Endothelial cell of umbilical vein (primary cell): ENCODE measurements at regions of chr6 and their contacts with region 1.

Region 1: DNA sequence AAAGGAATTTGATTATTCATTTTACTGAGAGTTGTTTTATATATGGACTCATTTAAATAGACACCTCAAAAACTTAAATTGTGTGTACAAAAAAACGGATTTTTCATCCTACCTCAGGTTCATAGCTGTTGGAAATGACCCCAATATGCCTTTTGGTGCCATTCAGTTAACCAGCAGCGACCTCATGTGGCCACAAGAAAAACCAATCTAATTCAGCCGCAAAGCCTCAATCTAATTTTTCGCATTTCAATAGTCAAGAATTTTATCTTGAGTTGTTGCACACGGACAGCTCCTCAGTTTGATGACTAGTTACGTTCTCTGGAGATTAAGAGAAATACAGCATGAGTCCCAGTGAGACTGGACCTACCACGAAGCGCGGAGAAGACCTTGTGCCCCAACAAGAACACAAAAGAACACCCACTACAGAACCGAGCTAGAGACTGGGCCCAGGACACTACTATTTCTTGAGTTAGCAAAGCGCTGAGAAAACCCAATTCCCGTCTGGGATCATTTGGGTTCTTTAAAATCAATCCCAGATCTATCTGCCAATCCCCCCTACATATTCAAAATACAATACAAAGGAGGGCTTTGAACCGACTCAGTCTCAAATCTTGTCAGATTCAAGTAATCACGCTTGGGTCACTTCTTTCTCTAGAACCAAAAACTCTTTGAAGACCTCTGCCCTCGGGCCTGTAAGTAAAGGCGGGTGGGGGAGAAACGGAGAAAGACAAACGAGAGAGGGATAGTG is 1.1 kb downstream of the TCP11 start:
- DNase-seq: peak; percentile 75
- H3K4me3 ChIP-seq: no peak overlapping the region
- H3K27ac ChIP-seq: no peak overlapping the region
- H3K4me1 ChIP-seq: no peaks in the 10 kb centered on the region
- H3K27me3 ChIP-seq: no peaks in the 10 kb centered on the region
- CTCF ChIP-seq: peak; percentile 62 to 80
- POLR2A ChIP-seq: no peak

Region 2: DNA sequence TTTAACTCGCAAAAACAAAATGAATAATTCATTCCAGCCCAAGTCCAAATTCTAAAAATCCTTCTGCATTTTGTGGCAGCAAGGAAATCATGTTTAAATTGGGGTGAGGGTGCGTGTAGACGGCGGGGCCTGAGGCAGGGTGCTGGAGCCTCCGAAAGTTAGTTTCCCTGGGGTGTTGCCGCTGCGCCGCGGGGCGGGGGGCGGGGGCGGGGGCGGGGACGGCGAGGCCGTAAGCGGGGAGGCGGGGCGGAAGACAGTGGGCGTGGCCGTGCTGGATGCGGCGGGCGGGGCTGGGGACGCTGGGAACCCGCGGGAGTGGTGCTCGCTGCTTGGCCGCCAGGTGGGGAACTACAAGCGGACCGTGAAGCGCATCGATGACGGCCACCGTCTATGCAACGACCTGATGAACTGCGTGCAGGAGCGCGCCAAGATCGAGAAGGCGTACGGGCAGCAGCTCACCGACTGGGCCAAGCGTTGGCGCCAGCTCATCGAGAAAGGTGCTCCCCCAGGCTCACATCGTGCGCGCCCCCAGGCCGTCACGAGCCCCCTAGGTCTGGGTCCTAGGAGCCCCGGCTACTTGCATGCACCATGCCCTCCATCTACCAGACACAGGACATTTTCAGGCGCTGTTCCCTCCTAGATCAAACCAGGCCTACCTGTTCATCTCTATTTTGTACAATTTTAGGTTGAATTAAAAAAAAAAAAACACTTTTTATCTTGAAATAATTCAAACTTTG is 612.9 kb before region 1 on chr6:
- CTCF ChIA-PET with region 1: no interaction called
- POLR2A ChIA-PET with region 1: no interaction called
- dilution Hi-C with region 1: no loop called
- intact Hi-C with region 1: loop called (anchors 1 kb)
- DNase-seq: peak; percentile 89
- H3K4me3 ChIP-seq: peak overlapping the region in 2 of 3 experiments; percentile 4 to 42
- H3K27ac ChIP-seq: no peak overlapping the region
- H3K4me1 ChIP-seq: peaks cover 2% of the 10 kb centered on the region
- H3K27me3 ChIP-seq: no peaks in the 10 kb centered on the region
- CTCF ChIP-seq: peak; percentile 56 to 86
- POLR2A ChIP-seq: peak; percentile 42

Region 3: GRCh38 chr6:34867484-34867883 is 272.6 kb before region 1 on chr6:
- CTCF ChIA-PET with region 1: interaction called, 4 read pairs
- POLR2A ChIA-PET with region 1: no interaction called
- dilution Hi-C with region 1: no loop called
- intact Hi-C with region 1: loop called (anchors 10 kb)
- DNase-seq: no peak
- H3K4me3 ChIP-seq: no peak overlapping the region
- H3K27ac ChIP-seq: no peak overlapping the region
- H3K4me1 ChIP-seq: peaks cover 22% of the 10 kb centered on the region
- H3K27me3 ChIP-seq: no peaks in the 10 kb centered on the region
- CTCF ChIP-seq: no peak
- POLR2A ChIP-seq: no peak

Region 4: GRCh38 chr6:34887753-34888513 is 252.1 kb before region 1 on chr6 and contains the start of gene TAF11:
- CTCF ChIA-PET with region 1: interaction called, 18 read pairs
- POLR2A ChIA-PET with region 1: no interaction called
- dilution Hi-C with region 1: no loop called
- intact Hi-C with region 1: no loop called
- DNase-seq: peak; percentile 93
- H3K4me3 ChIP-seq: peak within 1 kb of the TSS; percentile 80 to 96 (median 87)
- H3K27ac ChIP-seq: peak within 1 kb of the TSS; percentile 82
- H3K4me1 ChIP-seq: peaks cover 14% of the 10 kb centered on the region
- H3K27me3 ChIP-seq: no peaks in the 10 kb centered on the region
- CTCF ChIP-seq: no peak
- POLR2A ChIP-seq: peak; percentile 83
- total RNA-seq, gene TAF11: 37.1 and 41.0 TPM in 2 replicates

Region 5: DNA sequence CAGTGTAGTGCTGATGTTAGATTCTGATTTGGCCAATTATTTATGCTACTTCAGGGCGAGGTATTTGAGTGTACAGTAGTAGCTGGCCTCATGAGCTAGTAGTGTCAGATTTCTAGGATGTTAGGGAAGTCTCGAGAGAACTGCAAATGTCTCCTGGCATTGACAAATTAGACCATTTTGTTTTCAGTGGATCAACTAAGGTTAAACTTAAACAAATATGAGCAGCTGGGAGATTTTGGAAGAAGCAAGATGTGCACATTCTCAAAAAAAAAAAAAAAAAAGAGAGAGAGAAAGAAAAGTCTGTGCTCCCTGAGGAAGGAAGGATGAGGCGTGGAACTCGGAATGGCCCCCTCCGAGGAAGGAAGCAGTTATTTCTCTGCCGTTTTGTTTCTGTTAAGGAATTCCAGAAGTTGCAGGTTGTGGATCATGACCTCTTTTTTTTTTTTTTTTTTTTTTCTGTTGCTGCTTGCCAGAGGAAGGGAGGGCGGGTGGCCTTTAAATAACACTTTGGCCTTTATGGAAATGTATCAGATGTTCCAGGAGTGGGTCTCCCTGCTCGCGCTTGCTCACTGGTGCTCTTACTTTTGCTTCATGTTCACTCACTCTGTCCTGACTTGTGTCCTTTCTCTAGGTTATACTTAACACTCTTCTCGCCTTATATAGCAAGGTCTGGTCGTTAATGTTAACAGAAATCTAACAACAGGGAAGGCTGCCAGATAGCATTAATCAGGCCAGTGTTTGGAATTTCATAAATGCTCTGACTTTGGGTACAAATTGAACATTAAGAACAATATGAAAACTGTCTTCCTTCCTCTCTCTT is 123.4 kb before region 1 on chr6:
- CTCF ChIA-PET with region 1: interaction called, 10 read pairs
- POLR2A ChIA-PET with region 1: no interaction called
- dilution Hi-C with region 1: no loop called
- intact Hi-C with region 1: no loop called
- DNase-seq: peak; percentile 92
- H3K4me3 ChIP-seq: peak overlapping the region in 2 of 3 experiments; percentile 33 to 36
- H3K27ac ChIP-seq: peak overlapping the region; percentile 84
- H3K4me1 ChIP-seq: peaks cover 61% of the 10 kb centered on the region
- H3K27me3 ChIP-seq: no peaks in the 10 kb centered on the region
- CTCF ChIP-seq: no peak
- POLR2A ChIP-seq: peak; percentile 74

Region 6: DNA sequence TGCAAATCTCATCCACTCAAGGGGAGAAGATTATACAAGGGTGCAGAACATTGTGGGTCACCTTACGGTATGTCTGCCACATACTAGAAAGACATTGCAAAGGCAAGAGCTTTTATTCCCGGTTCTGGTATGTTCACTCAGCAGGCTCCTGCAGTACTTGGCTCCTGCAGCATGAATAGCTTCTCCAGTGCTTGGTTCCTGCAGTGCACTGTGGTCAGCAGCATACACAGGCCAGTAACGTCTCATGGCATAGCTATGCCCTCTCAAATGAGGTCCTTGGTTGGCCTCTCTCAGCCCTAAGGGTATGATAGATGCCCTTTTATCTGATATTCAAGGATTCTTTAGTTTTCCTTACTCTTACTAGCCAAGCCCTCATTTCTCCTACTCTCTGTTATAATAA is 11.6 kb before region 1 on chr6:
- CTCF ChIA-PET with region 1: interaction called, 13 read pairs
- POLR2A ChIA-PET with region 1: no interaction called
- dilution Hi-C with region 1: no loop called
- intact Hi-C with region 1: no loop called
- DNase-seq: no peak
- H3K4me3 ChIP-seq: no peak overlapping the region
- H3K27ac ChIP-seq: no peak overlapping the region
- H3K4me1 ChIP-seq: no peaks in the 10 kb centered on the region
- H3K27me3 ChIP-seq: peaks cover 10 to 13% of the 10 kb centered on the region in 2 experiments
- CTCF ChIP-seq: no peak
- POLR2A ChIP-seq: no peak

Region 7: GRCh38 chr6:35202066-35202546 is 62.0 kb after region 1 on chr6:
- CTCF ChIA-PET with region 1: interaction called, 168 read pairs
- POLR2A ChIA-PET with region 1: no interaction called
- dilution Hi-C with region 1: no loop called
- intact Hi-C with region 1: loop called (anchors 1 kb)
- DNase-seq: no peak
- H3K4me3 ChIP-seq: no peak overlapping the region
- H3K27ac ChIP-seq: no peak overlapping the region
- H3K4me1 ChIP-seq: no peaks in the 10 kb centered on the region
- H3K27me3 ChIP-seq: peaks cover 17 to 20% of the 10 kb centered on the region in 2 experiments
- CTCF ChIP-seq: no peak
- POLR2A ChIP-seq: no peak

Region 8: GRCh38 chr6:35640017-35640664 is 500.1 kb after region 1 on chr6:
- CTCF ChIA-PET with region 1: no interaction called
- POLR2A ChIA-PET with region 1: no interaction called
- dilution Hi-C with region 1: no loop called
- intact Hi-C with region 1: no loop called
- DNase-seq: no peak
- H3K4me3 ChIP-seq: no peak overlapping the region
- H3K27ac ChIP-seq: no peak overlapping the region
- H3K4me1 ChIP-seq: no peaks in the 10 kb centered on the region
- H3K27me3 ChIP-seq: no peaks in the 10 kb centered on the region
- CTCF ChIP-seq: no peak
- POLR2A ChIP-seq: no peak